Mammary epithelial cell (primary cell): ENCODE measurements at regions of chr7 and their contacts with region 1.

Region 1: DNA sequence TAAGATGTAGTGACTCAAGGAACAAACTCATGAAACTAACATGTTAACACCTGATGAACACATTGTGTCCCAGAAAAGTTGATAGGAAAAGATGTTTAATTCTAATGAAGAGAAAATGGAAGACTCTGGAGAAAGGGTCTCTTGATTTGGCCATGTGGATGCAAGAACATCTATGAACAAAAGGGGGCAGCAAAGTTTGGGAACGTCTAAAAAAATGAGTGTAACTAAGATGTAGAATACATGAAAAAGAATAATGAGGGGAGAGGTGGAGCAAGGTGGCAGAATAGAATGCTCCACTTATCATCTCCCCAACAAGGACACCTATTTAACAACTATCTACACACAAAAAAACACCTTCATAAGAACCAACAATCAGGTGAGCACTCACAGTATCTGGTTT is 805.1 kb downstream of the TNS3 start:
- DNase-seq: peak; percentile 16
- H3K4me3 ChIP-seq: no peak overlapping the region
- H3K27ac ChIP-seq: no peak overlapping the region
- H3K4me1 ChIP-seq: no peaks in the 10 kb centered on the region
- H3K27me3 ChIP-seq: no peaks in the 10 kb centered on the region
- CTCF ChIP-seq: peak; percentile 49 to 58

Region 2: GRCh38 chr7:46741938-46742540 is 34.8 kb before region 1 on chr7:
- CTCF ChIA-PET with region 1: no interaction called
- dilution Hi-C with region 1: no loop called
- in situ Hi-C with region 1: no loop called
- intact Hi-C with region 1: no loop called
- DNase-seq: no peak
- H3K4me3 ChIP-seq: no peak overlapping the region
- H3K27ac ChIP-seq: no peak overlapping the region
- H3K4me1 ChIP-seq: no peaks in the 10 kb centered on the region
- H3K27me3 ChIP-seq: no peaks in the 10 kb centered on the region
- CTCF ChIP-seq: no peak

Region 3: GRCh38 chr7:47179812-47180515 is 403.2 kb after region 1 on chr7:
- CTCF ChIA-PET with region 1: no interaction called
- dilution Hi-C with region 1: no loop called
- in situ Hi-C with region 1: no loop called
- intact Hi-C with region 1: loop called (anchors 5 kb)
- DNase-seq: peak; percentile 29
- H3K4me3 ChIP-seq: no peak overlapping the region
- H3K27ac ChIP-seq: no peak overlapping the region
- H3K4me1 ChIP-seq: no peaks in the 10 kb centered on the region
- H3K27me3 ChIP-seq: no peaks in the 10 kb centered on the region
- CTCF ChIP-seq: peak; percentile 85